Colonic mucosa (tissue), 4 donors: ENCODE measurements at regions of chr3 and their contacts with region 1.

Region 1: GRCh38 chr3:98593046-98593936 is at the start of gene CPOX:
- DNase-seq: peak; percentile 96
- H3K4me3 ChIP-seq: peak within 1 kb of the TSS; percentile 73
- H3K27ac ChIP-seq: peak within 1 kb of the TSS; percentile 73
- H3K4me1 ChIP-seq: no peaks in the 10 kb centered on the region
- H3K27me3 ChIP-seq: no peaks in the 10 kb centered on the region
- CTCF ChIP-seq: no peak
- total RNA-seq, gene CPOX: 23.3 to 31.7 TPM

Region 2: DNA sequence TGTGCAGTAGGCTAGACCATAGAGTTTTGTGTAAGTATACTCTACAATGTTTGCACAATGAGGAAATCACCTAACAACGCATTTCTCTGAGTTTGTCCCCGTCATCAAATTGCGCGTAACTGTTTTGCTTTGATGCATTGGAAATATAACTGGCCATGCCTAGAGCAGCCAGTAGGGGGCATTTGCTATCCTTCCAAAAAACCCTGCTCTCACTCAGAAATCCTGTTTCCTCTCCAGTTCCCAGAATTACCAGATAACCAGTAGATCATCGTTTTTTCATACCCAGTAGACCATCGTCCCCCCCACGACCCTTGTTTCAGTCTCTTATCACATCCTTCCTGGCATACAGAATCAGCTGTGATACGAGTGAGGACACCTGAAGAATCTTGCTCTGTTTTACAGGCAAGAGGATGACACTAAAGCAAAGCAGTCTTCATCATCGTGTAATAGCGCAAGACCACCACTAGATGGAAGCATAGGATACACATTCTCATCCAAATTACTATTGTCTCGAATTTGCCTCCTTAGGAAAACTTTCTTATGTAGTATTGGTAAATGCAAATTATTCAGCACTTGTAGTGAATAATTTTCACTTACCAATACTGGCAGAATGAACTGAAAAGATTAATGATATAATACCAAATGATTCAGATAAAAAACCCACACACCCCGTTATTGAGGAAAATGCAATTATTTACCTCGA is 553.8 kb before region 1 on chr3:
- intact Hi-C with region 1: loop called (anchors 10 kb)
- DNase-seq: peak; percentile 58
- H3K4me3 ChIP-seq: no peak overlapping the region
- H3K27ac ChIP-seq: no peak overlapping the region
- H3K4me1 ChIP-seq: no peaks in the 10 kb centered on the region
- H3K27me3 ChIP-seq: no peaks in the 10 kb centered on the region
- CTCF ChIP-seq: peak; percentile 92

Region 3: DNA sequence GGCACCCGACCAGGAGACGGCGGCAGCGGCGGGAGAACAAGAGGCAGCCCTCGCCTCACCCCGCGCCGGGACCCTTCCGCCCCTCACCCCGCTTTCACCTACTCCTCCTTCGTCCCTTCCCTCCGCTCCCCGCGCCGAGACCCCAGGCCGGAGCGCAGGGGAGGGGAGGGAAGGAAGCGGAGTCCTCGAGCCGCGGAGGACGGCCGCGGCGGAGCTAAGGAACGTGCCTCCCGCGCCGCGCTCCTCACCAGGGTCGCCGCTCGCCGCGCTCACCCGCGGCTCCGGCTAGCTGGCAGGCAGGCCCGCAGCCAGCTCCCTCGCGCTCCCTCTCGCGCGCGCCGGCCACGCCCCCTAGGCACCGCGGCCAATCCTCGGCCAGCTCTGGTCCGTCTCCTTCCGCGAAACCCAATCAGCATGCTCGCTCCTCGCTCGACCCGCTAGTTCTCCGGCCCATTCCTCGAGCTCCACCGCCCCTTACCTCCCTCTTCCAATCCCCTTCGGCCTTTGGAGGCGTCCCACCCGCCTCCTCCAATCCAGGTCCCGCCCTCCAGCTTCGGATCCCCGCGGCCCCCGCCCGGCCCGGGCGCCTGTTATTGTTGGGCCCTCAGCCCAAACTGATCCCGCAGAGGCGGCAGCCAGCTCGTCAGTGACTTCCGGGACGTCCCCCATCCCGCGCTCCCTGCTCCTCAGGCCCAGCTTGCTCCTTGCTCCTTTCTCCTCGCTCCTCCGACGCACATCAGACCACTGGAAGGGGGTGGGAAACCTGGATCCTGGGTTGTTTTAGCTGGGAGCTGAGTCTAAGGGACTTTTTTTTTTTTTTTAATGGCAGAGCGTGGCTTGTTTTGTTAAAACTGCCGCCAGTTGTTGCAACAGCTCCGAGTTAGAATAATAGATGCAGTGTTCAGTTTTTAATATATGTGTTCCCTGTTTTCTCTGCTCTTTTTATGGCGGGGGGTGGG is 308.4 kb after region 1 on chr3 and contains the start of gene DCBLD2:
- intact Hi-C with region 1: loop called (anchors 10 kb)
- DNase-seq: peak; percentile 97
- H3K4me3 ChIP-seq: peak within 1 kb of the TSS; percentile 89
- H3K27ac ChIP-seq: peak within 1 kb of the TSS; percentile 78
- H3K4me1 ChIP-seq: no peaks in the 10 kb centered on the region
- H3K27me3 ChIP-seq: no peaks in the 10 kb centered on the region
- CTCF ChIP-seq: no peak
- total RNA-seq, gene DCBLD2: 12.8 to 13.0 TPM

Region 4: GRCh38 chr3:98994128-98994762 is 401.0 kb after region 1 on chr3:
- intact Hi-C with region 1: loop called (anchors 5 kb)
- DNase-seq: no peak
- H3K4me3 ChIP-seq: no peak overlapping the region
- H3K27ac ChIP-seq: no peak overlapping the region
- H3K4me1 ChIP-seq: no peaks in the 10 kb centered on the region
- H3K27me3 ChIP-seq: no peaks in the 10 kb centered on the region
- CTCF ChIP-seq: peak; percentile 38